ENCODE measurements at regions of chr1 and their contacts with region 1.

Region 1: DNA sequence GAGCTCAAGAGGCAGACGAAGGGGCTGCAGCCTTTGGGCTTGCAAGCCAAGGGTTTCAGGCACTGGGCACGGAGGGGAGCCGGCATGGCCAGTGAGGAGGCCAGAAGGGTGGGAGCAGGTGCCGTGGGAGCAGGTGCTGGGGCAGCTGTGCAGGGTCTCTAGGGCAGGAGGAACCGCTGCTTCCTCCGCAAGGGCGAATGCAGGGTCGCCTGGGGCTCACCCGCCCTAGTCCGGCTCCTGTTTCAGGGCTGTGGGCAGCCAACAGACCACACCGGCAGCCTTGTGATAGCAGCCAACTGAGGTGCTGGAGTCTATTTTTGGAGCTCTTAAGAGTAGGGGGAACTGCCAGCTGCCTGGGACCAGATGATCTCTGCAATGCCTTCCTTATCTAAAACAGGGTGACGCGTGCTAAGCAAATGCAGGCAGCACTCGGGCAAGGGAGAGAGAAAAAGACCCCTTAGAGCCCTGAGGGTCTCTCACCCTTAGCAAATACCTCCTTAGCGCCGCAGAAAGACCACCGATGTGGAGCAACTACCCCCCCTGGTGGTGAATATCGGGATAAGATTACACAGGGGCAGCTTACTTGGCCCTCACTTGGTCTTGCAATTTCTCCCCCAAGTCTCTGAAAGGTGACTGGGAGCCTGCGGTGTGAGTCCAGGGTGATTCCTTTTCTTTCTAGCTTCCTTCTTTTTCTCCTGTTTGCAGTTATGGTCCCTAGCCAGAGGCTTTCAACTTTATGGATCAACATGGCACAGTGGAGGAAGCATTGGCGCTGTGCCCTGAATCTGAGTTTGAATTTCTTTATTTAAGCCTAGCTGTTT is 20.7 kb upstream of the MAPKAPK2 start:
- DNase-seq: no peak
- H3K4me3 ChIP-seq: no peak overlapping the region
- H3K27me3 ChIP-seq: peaks cover 15% of the 10 kb centered on the region
- CTCF ChIP-seq: peak; percentile 73

Region 2: DNA sequence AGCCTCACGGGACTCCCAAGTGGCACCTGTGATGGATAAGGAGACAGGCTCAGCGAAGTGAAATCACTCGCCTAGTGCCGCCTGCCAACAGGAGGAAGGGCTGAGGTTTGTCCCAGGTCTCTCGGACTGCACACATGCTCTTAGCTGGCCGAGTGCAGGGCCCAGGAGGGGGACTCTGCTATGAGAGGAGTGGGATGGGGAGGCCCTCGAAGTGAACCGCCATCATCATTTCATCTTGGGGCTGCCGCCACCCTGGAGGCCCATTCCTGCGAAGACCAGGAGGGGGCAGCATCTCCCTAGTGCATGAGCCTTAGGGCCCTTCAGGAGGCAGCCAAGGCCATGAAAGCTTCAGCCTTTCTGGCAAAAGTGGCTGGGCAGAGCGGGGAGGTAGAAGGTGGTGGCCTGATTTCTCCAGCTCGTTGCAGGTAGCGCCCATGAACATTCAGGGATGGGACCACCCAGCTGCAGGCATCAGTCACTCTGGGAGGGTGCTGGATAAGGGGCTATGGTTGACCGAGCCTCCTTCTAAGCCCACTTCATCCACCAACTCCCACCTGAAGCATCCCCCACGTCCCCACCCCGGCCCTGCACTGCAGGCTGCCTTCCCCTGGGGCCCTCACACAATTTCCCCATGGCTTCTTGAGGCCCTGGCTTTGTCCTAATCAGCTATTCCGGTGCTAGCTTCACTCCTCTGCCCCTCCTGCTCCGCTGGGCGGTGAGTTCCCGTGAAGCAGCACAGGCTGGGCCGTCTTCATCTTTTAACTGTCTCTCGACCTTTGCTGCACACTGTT is 173.9 kb before region 1 on chr1:
- CTCF ChIA-PET with region 1: interaction called, 43 read pairs
- POLR2A ChIA-PET with region 1: no interaction called
- DNase-seq: no peak
- H3K4me3 ChIP-seq: no peak overlapping the region
- H3K27me3 ChIP-seq: no peaks in the 10 kb centered on the region; the same call in 1 of the 2 replicates
- CTCF ChIP-seq: peak; percentile 98

Region 3: DNA sequence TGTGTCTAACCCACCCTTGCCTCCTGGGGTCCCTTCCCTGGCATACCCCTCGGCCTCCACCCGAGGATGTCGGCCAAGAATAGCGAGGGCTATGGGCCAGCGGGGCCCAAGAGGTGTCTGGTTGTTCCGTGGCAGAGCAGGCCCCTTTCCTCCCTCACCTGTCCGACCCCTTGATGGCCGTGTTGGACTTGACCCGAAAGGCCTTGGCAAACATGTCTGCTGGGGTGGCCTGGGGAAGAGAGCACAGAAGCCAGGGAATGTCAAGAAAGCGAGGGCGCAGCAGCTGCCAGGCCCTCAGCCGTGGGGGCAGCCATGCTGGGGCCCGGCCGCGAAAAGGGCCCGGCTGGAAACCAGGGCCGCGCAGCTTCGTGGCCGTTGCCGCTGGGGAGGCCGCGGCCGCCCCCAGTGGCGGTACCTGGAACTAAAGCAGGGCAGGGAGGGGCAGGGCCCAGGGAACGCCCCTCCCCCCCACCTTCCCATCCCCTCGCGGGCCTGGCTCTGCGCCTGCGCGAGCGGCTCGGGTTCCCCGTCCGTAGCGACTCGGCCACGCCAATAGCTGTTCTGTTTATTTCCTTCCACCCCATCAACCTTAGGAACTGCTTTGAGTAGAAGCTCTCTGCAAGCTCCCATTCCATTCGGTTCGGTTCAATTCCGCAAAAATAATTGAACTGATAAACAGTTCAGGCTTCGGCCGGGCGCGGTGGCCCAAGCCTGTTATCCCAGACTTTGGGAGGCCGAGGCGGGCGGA is 51.7 kb before region 1 on chr1 and contains the start of gene EIF2D:
- CTCF ChIA-PET with region 1: interaction called, 43 read pairs
- POLR2A ChIA-PET with region 1: no interaction called
- DNase-seq: no peak
- H3K4me3 ChIP-seq: peak within 1 kb of the TSS; percentile 82
- H3K27me3 ChIP-seq: 0 out of 2 replicates have a peak, but pooled peaks cover 2% of the 10 kb centered on the region
- CTCF ChIP-seq: peak; percentile 87
- polyA plus RNA-seq, gene EIF2D: 88.7 and 97.4 TPM in 2 replicates

Region 4: GRCh38 chr1:206674745-206675175 is 10.7 kb after region 1 on chr1:
- CTCF ChIA-PET with region 1: interaction called, 82 read pairs
- POLR2A ChIA-PET with region 1: no interaction called
- DNase-seq: peak; percentile 97
- H3K4me3 ChIP-seq: no peak overlapping the region
- H3K27me3 ChIP-seq: no peaks in the 10 kb centered on the region
- CTCF ChIP-seq: no peak

Region 5: DNA sequence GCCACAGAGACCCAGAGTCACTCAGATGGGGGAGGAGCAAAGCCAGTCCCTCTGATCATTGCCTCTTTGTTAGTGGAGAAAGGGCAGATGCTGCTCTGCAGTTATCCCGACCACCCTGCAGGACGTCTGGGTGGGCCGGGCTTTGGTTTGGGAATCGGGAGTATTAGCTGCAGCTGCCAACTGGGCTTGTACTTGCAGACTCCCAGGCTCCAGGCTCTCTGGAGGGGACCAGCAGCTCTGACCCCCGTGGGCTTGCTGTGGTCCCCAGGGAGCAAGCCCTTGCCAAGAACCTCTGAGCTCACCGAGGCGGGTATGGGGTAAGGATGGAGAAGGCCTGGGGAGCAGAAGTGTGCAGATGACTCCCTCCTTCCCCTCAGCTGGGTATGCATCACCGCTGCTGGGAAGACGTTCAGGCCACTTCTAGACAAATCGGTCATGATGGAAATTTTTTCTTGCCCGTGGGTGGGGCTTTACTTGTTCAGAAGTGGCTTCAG is 42.3 kb after region 1 on chr1:
- CTCF ChIA-PET with region 1: interaction called, 10 read pairs
- POLR2A ChIA-PET with region 1: no interaction called
- DNase-seq: peak; percentile 50
- H3K4me3 ChIP-seq: no peak overlapping the region
- H3K27me3 ChIP-seq: no peaks in the 10 kb centered on the region
- CTCF ChIP-seq: no peak

Region 6: GRCh38 chr1:206784471-206784903 is 120.4 kb after region 1 on chr1:
- CTCF ChIA-PET with region 1: no interaction called
- POLR2A ChIA-PET with region 1: no interaction called
- DNase-seq: no peak
- H3K4me3 ChIP-seq: no peak overlapping the region
- H3K27me3 ChIP-seq: no peaks in the 10 kb centered on the region; the same call in 1 of the 2 replicates
- CTCF ChIP-seq: no peak

Region 7: DNA sequence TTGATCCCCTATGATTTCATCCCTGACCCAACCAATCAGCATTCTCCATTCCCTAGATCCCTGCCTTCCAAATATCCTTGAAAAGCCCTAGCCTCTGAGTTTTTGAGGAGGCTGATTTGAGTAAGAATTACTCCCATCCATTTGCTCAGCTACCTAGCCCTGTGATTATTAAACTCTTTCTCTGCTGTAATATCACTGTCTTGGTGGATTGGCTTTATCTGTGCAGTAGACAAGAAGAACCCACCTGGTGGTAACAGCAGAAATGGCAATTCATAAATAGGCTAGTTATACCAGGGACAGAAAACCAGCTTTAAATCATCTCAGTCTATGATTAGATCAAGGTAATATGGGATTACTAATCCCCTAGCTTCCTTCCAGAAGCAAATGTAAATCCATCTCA is 214.4 kb after region 1 on chr1:
- CTCF ChIA-PET with region 1: no interaction called
- POLR2A ChIA-PET with region 1: no interaction called
- DNase-seq: no peak
- H3K4me3 ChIP-seq: no peak overlapping the region
- H3K27me3 ChIP-seq: no peaks in the 10 kb centered on the region
- CTCF ChIP-seq: no peak; the same call in 1 of the 2 replicates

Region 8: DNA sequence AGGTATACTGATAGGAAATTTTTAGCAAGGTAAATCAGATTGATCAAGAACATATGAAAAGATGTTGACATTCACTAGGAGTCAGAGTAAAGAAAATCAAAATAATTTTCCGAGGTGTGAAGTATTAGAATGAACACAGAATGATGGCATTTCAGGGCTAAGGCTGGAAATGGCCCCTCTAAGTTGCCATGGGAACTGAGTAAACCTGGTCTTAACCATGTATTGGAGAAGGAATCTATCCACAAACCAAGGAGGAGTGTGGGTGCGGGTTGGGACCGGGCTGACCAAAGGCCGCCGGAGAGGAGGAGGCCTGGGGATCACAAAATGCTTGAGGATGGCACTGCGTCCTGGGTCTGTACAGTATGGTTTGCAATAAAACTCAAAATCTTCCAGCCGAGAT is 710.8 kb after region 1 on chr1:
- CTCF ChIA-PET with region 1: no interaction called
- POLR2A ChIA-PET with region 1: no interaction called
- DNase-seq: no peak
- H3K4me3 ChIP-seq: no peak overlapping the region
- H3K27me3 ChIP-seq: no peaks in the 10 kb centered on the region
- CTCF ChIP-seq: no peak

Measured in BJ (cell line).